Left cardiac atrium (tissue), 4 donors: ENCODE measurements at regions of chr18 and their contacts with region 1.

Region 1: GRCh38 chr18:2173464-2173863 is 397.8 kb downstream of the METTL4 start:
- DNase-seq: peak; percentile 65
- ATAC-seq: peak; percentile 94 to 97

Region 2: DNA sequence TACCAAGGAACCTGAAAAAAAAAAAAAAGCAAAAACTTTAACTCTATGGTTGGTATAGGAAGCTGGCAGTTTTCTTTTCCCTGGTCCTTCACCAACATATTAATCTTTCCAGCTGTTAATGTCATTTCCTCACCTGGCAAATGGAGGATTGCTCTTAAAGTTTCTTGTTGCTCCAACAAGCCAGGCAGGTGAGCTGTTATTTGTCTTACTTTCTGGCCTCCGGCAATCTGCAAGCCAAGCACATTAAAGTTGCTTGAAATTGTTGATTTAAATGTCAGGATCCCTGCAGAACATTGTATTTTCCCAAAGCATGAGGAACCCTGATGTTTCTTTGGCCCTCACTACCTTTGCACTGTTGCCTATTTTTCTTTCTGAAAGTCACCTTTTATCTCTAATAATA is 267.0 kb before region 1 on chr18:
- intact Hi-C with region 1: no loop called
- DNase-seq: no peak
- ATAC-seq: no peak

Region 3: DNA sequence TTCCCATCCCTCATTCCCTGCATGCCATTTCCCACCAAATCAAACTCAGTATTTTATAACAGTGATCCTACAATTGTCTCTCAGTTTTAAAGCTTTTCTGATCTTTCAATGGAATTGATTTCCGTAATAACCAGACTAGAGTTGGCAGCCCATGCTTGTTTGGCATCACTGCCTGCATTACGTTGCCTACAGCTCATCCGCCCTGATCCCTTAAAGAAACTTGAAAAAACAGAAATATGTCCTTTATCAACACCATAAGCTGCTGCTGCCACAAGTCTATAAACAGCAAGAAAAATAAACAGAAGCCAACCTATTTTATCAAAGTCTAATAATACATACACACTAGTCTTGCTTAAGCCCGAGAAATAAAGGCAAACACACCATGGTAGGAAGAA is 66.8 kb after region 1 on chr18:
- intact Hi-C with region 1: no loop called
- DNase-seq: no peak
- ATAC-seq: no peak

Region 4: GRCh38 chr18:2515908-2516625 is 342.6 kb after region 1 on chr18:
- intact Hi-C with region 1: loop called in 1 of 2 experiments (anchors 5 kb)
- DNase-seq: no peak
- ATAC-seq: peak in 1 of 2 donors; percentile 43